Heart right ventricle (tissue), 16 donors: ENCODE measurements at regions of chr21 and their contacts with region 1.

Region 1: GRCh38 chr21:28342212-28342810 is 650.4 kb downstream of the LTN1 start:
- DNase-seq: no peak
- ATAC-seq: no peak
- H3K4me3 ChIP-seq: no peak overlapping the region
- H3K27ac ChIP-seq: no peak overlapping the region
- H3K4me1 ChIP-seq: peaks cover 0 to 28% (median 16%) of the 10 kb centered on the region in 9 donors
- H3K27me3 ChIP-seq: no peaks in the 10 kb centered on the region
- CTCF ChIP-seq: no peak

Region 2: DNA sequence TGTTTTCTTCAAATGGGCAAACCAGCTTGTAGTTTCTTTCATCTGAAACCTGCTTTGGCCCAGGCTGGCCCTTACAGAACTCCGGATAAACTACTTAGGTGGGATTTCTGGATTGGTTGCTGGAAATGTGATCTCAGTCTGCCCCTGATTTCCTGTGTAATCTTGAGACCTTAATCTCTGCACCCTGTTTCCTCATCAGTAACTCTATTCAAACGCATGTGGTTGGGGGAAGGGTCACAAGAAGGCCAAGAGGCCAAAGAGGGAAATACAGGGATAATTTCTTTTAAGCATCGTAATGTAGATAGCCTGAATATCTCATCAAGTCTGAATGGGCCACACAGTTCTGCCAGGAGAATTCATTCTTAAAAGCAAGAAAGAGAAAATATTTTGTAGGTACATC is 166.7 kb after region 1 on chr21:
- intact Hi-C with region 1: loop called in 4 of 10 experiments (anchors 5 to 10 kb)
- DNase-seq: no peak
- ATAC-seq: peak in 4 of 8 donors; percentile 11 to 71 (median 52)
- H3K4me3 ChIP-seq: no peak overlapping the region
- H3K27ac ChIP-seq: peak overlapping the region in 3 of 10 donors; percentile 2 to 56 (median 5)
- H3K4me1 ChIP-seq: peaks cover 0 to 32% (median 0%) of the 10 kb centered on the region in 9 donors
- H3K27me3 ChIP-seq: no peaks in the 10 kb centered on the region
- CTCF ChIP-seq: no peak

Region 3: GRCh38 chr21:28737674-28738419 is 395.5 kb after region 1 on chr21:
- intact Hi-C with region 1: loop called in 5 of 10 experiments (anchors 2 to 10 kb)
- DNase-seq: no peak
- ATAC-seq: peak; percentile 36 to 88 (median 72)
- H3K4me3 ChIP-seq: no peak overlapping the region
- H3K27ac ChIP-seq: peak overlapping the region in 8 of 10 donors; percentile 6 to 76 (median 58)
- H3K4me1 ChIP-seq: peaks cover 0 to 27% (median 19%) of the 10 kb centered on the region in 9 donors
- H3K27me3 ChIP-seq: no peaks in the 10 kb centered on the region
- CTCF ChIP-seq: no peak